ENCODE measurements at regions of chr2 and their contacts with region 1.

Region 1: GRCh38 chr2:25521665-25522387 is 151.6 kb downstream of the DTNB start:
- DNase-seq: peak; percentile 12
- H3K4me3 Mint-ChIP-seq: no peak overlapping the region
- H3K27ac Mint-ChIP-seq: peak overlapping the region; percentile 26
- H3K4me1 Mint-ChIP-seq: peaks cover 9% of the 10 kb centered on the region
- H3K27me3 Mint-ChIP-seq: no peaks in the 10 kb centered on the region

Region 2: GRCh38 chr2:25314514-25315315 is 207.1 kb before region 1 on chr2:
- CTCF ChIA-PET with region 1: no interaction called
- POLR2A ChIA-PET with region 1: no interaction called
- intact Hi-C with region 1: loop called (anchors 5 kb)
- DNase-seq: peak; percentile 96
- H3K4me3 Mint-ChIP-seq: peak overlapping the region; percentile 90
- H3K27ac Mint-ChIP-seq: peak overlapping the region; percentile 95
- H3K4me1 Mint-ChIP-seq: peaks cover 61% of the 10 kb centered on the region
- H3K27me3 Mint-ChIP-seq: no peaks in the 10 kb centered on the region

Region 3: GRCh38 chr2:25453199-25453905 is 68.5 kb before region 1 on chr2:
- CTCF ChIA-PET with region 1: no interaction called
- POLR2A ChIA-PET with region 1: no interaction called
- intact Hi-C with region 1: loop called (anchors 2 kb)
- DNase-seq: peak; percentile 70
- H3K4me3 Mint-ChIP-seq: peak overlapping the region; percentile 5
- H3K27ac Mint-ChIP-seq: peak overlapping the region; percentile 93
- H3K4me1 Mint-ChIP-seq: peaks cover 26% of the 10 kb centered on the region
- H3K27me3 Mint-ChIP-seq: no peaks in the 10 kb centered on the region

Region 4: DNA sequence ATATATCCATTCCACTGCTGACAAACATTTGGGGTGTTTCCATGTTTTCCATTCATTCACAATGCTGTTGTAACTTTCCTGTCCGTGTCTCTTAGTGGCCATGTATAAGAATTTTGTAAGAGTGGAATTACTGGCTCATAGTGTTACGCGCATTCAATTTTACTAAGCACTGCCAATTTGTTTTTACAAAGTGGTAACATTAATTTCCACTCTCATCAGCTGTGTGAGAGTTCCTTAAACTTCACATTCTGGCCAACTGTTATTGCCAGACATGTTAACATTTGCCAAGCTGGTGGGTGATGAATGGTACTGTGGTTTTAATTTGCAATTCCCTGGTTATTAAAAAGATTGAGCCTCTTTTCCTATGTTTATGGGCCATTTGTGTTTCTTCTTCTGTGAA is 17.3 kb after region 1 on chr2:
- CTCF ChIA-PET with region 1: no interaction called
- POLR2A ChIA-PET with region 1: no interaction called
- intact Hi-C with region 1: no loop called
- DNase-seq: no peak
- H3K4me3 Mint-ChIP-seq: no peak overlapping the region
- H3K27ac Mint-ChIP-seq: no peak overlapping the region
- H3K4me1 Mint-ChIP-seq: no peaks in the 10 kb centered on the region
- H3K27me3 Mint-ChIP-seq: no peaks in the 10 kb centered on the region

Measured in activated CD4-positive, alpha-beta memory T cell treated with anti-CD3 and anti-CD28 coated beads for 36 hours (primary cell).